ENCODE measurements at regions of chr17 and their contacts with region 1.

Region 1: GRCh38 chr17:7219812-7220581 is at the starts of genes ACADVL and DLG4:
- DNase-seq: peak; percentile 90
- H3K4me3 ChIP-seq: peak within 1 kb of the TSS; percentile 79 to 99
- H3K27ac ChIP-seq: peak within 1 kb of the TSS; percentile 76 to 89
- H3K4me1 ChIP-seq: peaks cover 20 to 54% of the 10 kb centered on the region in 2 experiments; a peak in 3 of 4 replicates
- H3K27me3 ChIP-seq: no peaks in the 10 kb centered on the region
- CTCF ChIP-seq: no peak
- EP300 ChIP-seq: no peak
- RAD21 ChIP-seq: no peak
- polyA plus RNA-seq, gene ACADVL: 635 and 796 TPM in 2 replicates
- polyA plus RNA-seq, gene DLG4: 22.1 and 30.5 TPM in 2 replicates

Region 2: GRCh38 chr17:7239091-7240027 is 19.4 kb after region 1 on chr17 and contains the start of gene PHF23:
- CTCF ChIA-PET with region 1: interaction called, 44 read pairs
- POLR2A ChIA-PET with region 1: interaction called, 27 read pairs
- DNase-seq: peak; percentile 94
- H3K4me3 ChIP-seq: peak within 1 kb of the TSS; percentile 88 to 99
- H3K27ac ChIP-seq: peak within 1 kb of the TSS; percentile 75 to 99
- H3K4me1 ChIP-seq: peaks cover 36 to 41% of the 10 kb centered on the region in 2 experiments
- H3K27me3 ChIP-seq: no peaks in the 10 kb centered on the region
- CTCF ChIP-seq: no peak
- EP300 ChIP-seq: no peak
- RAD21 ChIP-seq: no peak
- polyA plus RNA-seq, gene PHF23: 53.3 and 58.5 TPM in 2 replicates

Measured in SK-N-SH (cell line).